ENCODE measurements at regions of chr19 and their contacts with region 1.

Region 1: GRCh38 chr19:10390652-10391286 is 10.4 kb upstream of the TYK2 start:
- DNase-seq: peak; percentile 81
- ATAC-seq: peak; percentile 71

Region 2: DNA sequence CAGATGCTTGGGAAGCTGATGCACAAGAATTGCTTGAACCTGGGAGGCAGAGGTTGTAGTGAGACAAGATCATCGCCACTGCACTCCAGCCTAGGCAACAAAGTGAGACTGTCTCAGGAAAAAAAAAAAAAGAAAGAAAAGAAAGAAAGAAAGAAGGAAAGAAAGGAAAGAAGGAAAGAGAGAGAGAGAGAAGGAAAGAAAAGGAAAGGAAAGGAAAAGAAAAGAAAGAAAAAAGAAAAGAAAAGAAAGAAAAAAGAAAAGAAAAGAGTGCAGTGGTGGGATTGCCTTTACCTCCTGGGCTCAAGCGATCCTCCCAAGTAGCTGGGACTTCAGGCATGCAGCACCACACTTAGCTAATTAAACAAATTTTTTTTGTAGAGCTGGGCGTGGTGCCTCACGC is 467.3 kb before region 1 on chr19:
- intact Hi-C with region 1: loop called (anchors 10 kb)
- DNase-seq: no peak
- ATAC-seq: no peak

Region 3: DNA sequence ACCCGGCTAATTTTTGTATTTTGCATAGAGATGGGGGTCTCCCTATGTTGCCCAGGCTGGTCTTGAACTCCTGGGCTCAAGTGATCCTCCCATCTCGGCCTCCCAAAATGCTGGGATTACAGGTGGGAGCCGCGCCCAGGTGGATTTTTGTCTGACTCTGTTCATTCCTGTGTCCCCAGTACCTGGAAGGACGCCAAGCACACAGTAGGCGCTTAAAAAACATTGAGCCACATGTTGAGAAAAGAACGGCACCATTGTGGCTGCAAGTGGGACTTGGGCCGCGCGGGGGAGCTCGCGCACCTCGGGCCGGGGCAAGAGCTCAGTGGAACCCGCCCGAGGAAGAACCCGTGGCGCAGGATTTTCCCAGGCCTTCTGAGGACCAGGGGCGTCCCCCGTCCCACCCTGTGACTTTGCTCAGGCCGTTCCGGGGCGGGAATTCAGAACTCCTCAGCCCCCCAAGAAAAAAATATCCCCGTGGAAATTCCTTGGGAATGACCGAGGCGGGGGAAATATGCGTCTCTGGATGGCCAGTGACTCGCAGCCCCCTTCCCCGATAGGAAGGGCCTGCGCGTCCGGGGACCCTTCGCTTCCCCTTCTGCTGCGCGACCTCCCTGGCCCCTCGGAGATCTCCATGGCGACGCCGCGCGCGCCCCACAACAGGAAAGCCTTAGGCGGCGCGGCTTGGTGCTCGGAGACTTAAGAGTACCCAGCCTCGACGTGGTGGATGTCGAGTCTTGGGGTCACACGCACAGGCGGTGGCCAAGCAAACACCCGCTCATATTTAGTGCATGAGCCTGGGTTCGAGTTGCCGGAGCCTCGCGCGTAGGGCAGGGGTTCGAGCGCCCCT is 121.2 kb before region 1 on chr19:
- intact Hi-C with region 1: loop called (anchors 5 kb)
- DNase-seq: peak; percentile 93
- ATAC-seq: peak; percentile 88

Measured in sciatic nerve (tissue), 2 donors.